AG04450 (cell line): ENCODE measurements at regions of chr2 and their contacts with region 1.

Region 1: DNA sequence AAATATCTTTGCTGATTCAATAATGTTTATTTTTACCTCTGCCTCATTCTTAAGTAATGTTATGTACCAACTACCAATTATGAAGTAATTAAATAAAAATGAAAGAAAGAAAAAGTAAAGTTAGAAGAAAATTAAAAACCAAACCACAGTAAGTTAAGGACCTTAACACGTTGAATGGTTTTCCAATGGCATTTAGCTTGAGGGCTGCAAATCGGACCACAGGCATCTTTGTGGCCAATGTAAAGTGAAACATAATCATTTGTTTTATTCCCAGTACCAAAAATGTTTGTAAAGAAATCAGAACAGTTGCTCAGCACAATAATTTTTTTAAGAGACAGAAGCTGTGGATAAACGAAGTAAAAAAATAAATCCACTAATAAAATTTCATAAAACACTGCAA is 1455.5 kb upstream of the ZEB2 start:
- DNase-seq: no peak
- H3K4me3 ChIP-seq: no peak overlapping the region
- H3K27ac ChIP-seq: no peak overlapping the region
- H3K27me3 ChIP-seq: no peaks in the 10 kb centered on the region
- CTCF ChIP-seq: no peak

Region 2: GRCh38 chr2:144703852-144704708 is 1271.3 kb before region 1 on chr2:
- CTCF ChIA-PET with region 1: interaction called, 12 read pairs
- POLR2A ChIA-PET with region 1: no interaction called
- DNase-seq: peak; percentile 26
- H3K4me3 ChIP-seq: no peak overlapping the region
- H3K27ac ChIP-seq: no peak overlapping the region
- H3K27me3 ChIP-seq: no peaks in the 10 kb centered on the region
- CTCF ChIP-seq: no peak

Region 3: DNA sequence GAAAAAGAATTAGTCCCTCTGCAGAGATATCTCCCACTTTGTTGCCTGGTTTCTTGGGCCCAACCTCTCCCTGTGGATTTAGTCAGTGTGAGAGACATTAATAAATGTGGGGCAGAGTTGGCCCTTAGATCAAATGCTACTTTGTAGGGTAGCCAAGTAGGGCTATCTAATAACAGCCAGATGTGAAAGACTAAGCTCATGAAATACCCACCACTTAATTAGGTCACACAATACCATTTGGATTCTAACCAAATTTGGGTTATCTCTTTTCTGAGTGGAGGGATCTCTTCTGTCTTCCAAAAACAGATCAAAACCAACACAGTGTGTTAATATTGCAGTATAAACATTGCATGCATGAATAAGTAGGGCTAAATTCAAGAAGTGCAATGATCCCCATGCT is 828.7 kb before region 1 on chr2:
- CTCF ChIA-PET with region 1: no interaction called
- POLR2A ChIA-PET with region 1: no interaction called
- DNase-seq: no peak
- H3K4me3 ChIP-seq: no peak overlapping the region
- H3K27ac ChIP-seq: no peak overlapping the region
- H3K27me3 ChIP-seq: no peaks in the 10 kb centered on the region
- CTCF ChIP-seq: no peak

Region 4: GRCh38 chr2:145845207-145845894 is 130.1 kb before region 1 on chr2:
- CTCF ChIA-PET with region 1: no interaction called
- POLR2A ChIA-PET with region 1: no interaction called
- DNase-seq: no peak
- H3K4me3 ChIP-seq: no peak overlapping the region
- H3K27ac ChIP-seq: no peak overlapping the region
- H3K27me3 ChIP-seq: no peaks in the 10 kb centered on the region
- CTCF ChIP-seq: no peak